T-cell (primary cell): ENCODE measurements at regions of chr18 and their contacts with region 1.

Region 1: GRCh38 chr18:24190590-24190989 is 51.7 kb downstream of the CABYR start:
- DNase-seq: no peak
- ATAC-seq: no peak
- H3K4me3 ChIP-seq: no peak overlapping the region
- H3K4me3 Mint-ChIP-seq: no peak overlapping the region
- H3K27ac ChIP-seq: no peak overlapping the region
- H3K27ac Mint-ChIP-seq: no peak overlapping the region
- H3K4me1 ChIP-seq: no peaks in the 10 kb centered on the region
- H3K4me1 Mint-ChIP-seq: no peaks in the 10 kb centered on the region
- H3K27me3 ChIP-seq: peaks cover 0 to 16% of the 10 kb centered on the region in 2 experiments
- H3K27me3 Mint-ChIP-seq: no peaks in the 10 kb centered on the region

Region 2: GRCh38 chr18:24212939-24213338 is 22.3 kb after region 1 on chr18:
- CTCF ChIA-PET with region 1: no interaction called
- POLR2A ChIA-PET with region 1: no interaction called
- DNase-seq: no peak
- ATAC-seq: no peak
- H3K4me3 ChIP-seq: no peak overlapping the region
- H3K4me3 Mint-ChIP-seq: no peak overlapping the region
- H3K27ac ChIP-seq: no peak overlapping the region
- H3K27ac Mint-ChIP-seq: no peak overlapping the region
- H3K4me1 ChIP-seq: no peaks in the 10 kb centered on the region
- H3K4me1 Mint-ChIP-seq: no peaks in the 10 kb centered on the region
- H3K27me3 ChIP-seq: peaks cover 0 to 3% of the 10 kb centered on the region in 2 experiments
- H3K27me3 Mint-ChIP-seq: no peaks in the 10 kb centered on the region

Region 3: DNA sequence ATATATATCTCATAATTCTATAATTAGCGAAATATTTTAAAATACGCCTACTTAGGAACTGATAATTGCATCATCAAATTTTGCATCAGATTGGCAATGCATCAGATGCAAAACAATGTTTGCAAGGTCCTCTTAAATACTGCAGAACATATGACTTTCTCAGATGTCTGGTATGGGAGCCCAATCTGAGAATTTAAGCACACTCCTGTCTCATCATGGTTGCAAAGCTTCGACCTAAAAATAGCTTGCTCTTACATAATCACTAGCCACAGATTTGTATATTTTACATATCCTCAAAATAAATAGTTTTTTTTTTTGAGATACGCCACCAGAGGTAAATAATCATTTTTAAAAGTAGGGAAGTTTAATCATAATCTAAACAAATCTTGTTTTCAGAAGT is 71.5 kb after region 1 on chr18:
- CTCF ChIA-PET with region 1: no interaction called
- POLR2A ChIA-PET with region 1: interaction called in 1 of 2 experiments, 10 read pairs
- DNase-seq: no peak
- ATAC-seq: no peak
- H3K4me3 ChIP-seq: no peak overlapping the region
- H3K4me3 Mint-ChIP-seq: no peak overlapping the region
- H3K27ac ChIP-seq: no peak overlapping the region
- H3K27ac Mint-ChIP-seq: no peak overlapping the region
- H3K4me1 ChIP-seq: no peaks in the 10 kb centered on the region
- H3K4me1 Mint-ChIP-seq: no peaks in the 10 kb centered on the region
- H3K27me3 ChIP-seq: no peaks in the 10 kb centered on the region
- H3K27me3 Mint-ChIP-seq: peaks cover 0 to 3% of the 10 kb centered on the region in 2 donors

Region 4: GRCh38 chr18:24315170-24315569 is 124.6 kb after region 1 on chr18:
- CTCF ChIA-PET with region 1: no interaction called
- POLR2A ChIA-PET with region 1: no interaction called
- DNase-seq: no peak
- ATAC-seq: no peak
- H3K4me3 ChIP-seq: no peak overlapping the region
- H3K4me3 Mint-ChIP-seq: no peak overlapping the region
- H3K27ac ChIP-seq: no peak overlapping the region
- H3K27ac Mint-ChIP-seq: no peak overlapping the region
- H3K4me1 ChIP-seq: no peaks in the 10 kb centered on the region
- H3K4me1 Mint-ChIP-seq: no peaks in the 10 kb centered on the region
- H3K27me3 ChIP-seq: no peaks in the 10 kb centered on the region
- H3K27me3 Mint-ChIP-seq: no peaks in the 10 kb centered on the region